ENCODE measurements at regions of chr6 and their contacts with region 1.

Region 1: DNA sequence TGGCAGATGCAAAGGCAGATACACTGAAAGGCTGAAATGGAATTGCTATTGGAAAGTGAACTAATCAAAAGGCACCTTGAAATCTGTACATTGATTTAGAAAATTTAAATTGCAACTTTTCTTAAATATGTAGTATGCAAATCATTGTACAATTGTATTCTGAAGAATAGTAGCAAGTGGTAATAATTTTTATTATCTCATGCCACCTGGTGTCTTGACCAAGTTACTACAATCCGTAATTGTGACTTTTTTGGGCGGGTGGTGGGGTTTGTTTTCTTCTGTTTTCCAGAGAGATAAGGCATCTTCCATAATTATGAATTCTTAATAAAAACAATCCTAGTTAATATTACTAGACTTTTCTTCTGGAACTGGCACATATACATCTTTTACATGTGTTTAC is 12.5 kb upstream of the BCKDHB start:
- DNase-seq: no peak
- H3K4me3 ChIP-seq: no peak overlapping the region
- H3K27ac ChIP-seq: no peak overlapping the region
- H3K4me1 ChIP-seq: no peaks in the 10 kb centered on the region
- H3K27me3 ChIP-seq: no peaks in the 10 kb centered on the region
- CTCF ChIP-seq: peak in 10 of 11 experiments; percentile 20 to 64 (median 56)
- POLR2A ChIP-seq: no peak

Region 2: GRCh38 chr6:79949233-79949632 is 144.8 kb before region 1 on chr6:
- intact Hi-C with region 1: loop called (anchors 5 kb)
- DNase-seq: no peak
- H3K4me3 ChIP-seq: no peak overlapping the region
- H3K27ac ChIP-seq: no peak overlapping the region
- H3K4me1 ChIP-seq: peaks cover 5 to 22% (median 20%) of the 10 kb centered on the region in 6 donors
- H3K27me3 ChIP-seq: peaks cover 0 to 66% (median 39%) of the 10 kb centered on the region in 7 donors
- CTCF ChIP-seq: peak in 9 of 11 experiments; percentile 14 to 60 (median 30)
- POLR2A ChIP-seq: no peak

Region 3: DNA sequence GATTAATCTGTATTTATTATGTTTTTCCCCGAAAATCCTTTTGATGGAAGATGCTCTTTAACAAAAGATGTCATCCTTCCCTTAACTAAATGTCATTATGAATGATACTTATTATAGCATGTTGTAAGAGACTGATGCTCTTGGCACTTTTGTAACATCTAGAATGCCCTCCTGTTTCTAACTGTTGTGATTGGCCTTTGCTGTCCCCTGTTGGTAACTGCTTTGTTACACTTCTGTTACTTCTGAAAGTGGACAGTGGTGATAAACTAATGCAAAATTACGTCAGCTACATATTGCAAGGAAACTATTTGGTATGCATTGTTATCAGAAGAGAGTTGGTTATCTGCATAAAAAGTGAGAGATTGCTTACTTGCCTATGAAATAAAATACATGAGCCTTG is 83.7 kb before region 1 on chr6:
- intact Hi-C with region 1: loop called (anchors 10 kb)
- DNase-seq: no peak
- H3K4me3 ChIP-seq: no peak overlapping the region
- H3K27ac ChIP-seq: no peak overlapping the region
- H3K4me1 ChIP-seq: peaks cover 0 to 7% (median under 1%) of the 10 kb centered on the region in 6 donors
- H3K27me3 ChIP-seq: no peaks in the 10 kb centered on the region
- CTCF ChIP-seq: no peak
- POLR2A ChIP-seq: no peak

Measured in spleen (tissue), 13 donors.